ENCODE measurements at regions of chr6 and their contacts with region 1.

Region 1: DNA sequence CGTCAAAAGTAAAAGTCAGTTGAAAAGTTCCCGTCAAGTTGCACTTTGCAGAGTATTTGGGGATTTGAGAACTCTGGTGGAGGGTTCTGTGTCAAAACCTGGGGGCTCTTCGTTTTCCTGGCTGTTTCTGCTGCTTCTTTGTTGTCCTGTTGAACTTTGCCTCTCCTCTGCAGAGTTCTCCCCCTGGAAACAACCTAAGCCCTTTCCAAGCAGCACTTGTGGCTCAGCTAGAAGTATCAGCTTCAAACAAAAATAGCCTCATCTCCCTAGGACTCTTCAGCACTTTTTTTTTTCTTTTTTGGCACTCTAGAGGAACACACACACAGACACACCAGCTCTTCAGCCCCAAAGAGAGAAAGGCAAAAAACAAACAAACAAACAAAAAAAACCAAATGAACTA is at the start of gene TRDN:
- DNase-seq: peak in 1 of 2 donors; percentile 41
- ATAC-seq: peak; percentile 71 to 91 (median 88)
- H3K4me3 ChIP-seq: peak within 1 kb of the TSS in 9 of 10 donors; percentile 33 to 60 (median 53)
- H3K27ac ChIP-seq: peak within 1 kb of the TSS; percentile 70 to 92 (median 88)
- H3K4me1 ChIP-seq: peaks cover 0 to 31% (median 0%) of the 10 kb centered on the region in 9 donors
- H3K27me3 ChIP-seq: no peaks in the 10 kb centered on the region
- CTCF ChIP-seq: no peak
- total RNA-seq, gene TRDN: 328 to 484 (median 437) TPM

Region 2: GRCh38 chr6:123434186-123434585 is 202.6 kb before region 1 on chr6:
- intact Hi-C with region 1: loop called in 1 of 10 experiments (anchors 10 kb)
- DNase-seq: no peak
- ATAC-seq: peak in 2 of 8 donors; percentile 27 to 55
- H3K4me3 ChIP-seq: no peak overlapping the region
- H3K27ac ChIP-seq: peak overlapping the region in 2 of 10 donors; percentile 9 to 24
- H3K4me1 ChIP-seq: peaks cover 0 to 9% (median 0%) of the 10 kb centered on the region in 9 donors
- H3K27me3 ChIP-seq: no peaks in the 10 kb centered on the region
- CTCF ChIP-seq: no peak

Region 3: DNA sequence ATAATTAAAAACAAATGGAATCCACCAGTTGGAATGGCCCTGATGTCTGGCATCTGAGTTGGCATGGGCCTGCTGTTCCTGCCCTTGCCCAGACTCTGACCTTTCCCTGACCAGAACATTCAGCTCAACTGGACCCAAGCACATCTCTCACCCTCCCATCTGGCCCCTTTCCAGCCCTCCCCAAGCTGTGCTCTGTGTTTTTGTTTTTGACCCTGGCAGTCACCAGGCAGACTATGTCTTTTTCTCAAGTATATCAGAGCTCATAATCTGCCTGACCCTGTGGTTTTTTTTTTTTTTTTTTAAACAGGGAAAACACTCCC is 117.6 kb before region 1 on chr6:
- intact Hi-C with region 1: loop called in 4 of 10 experiments (anchors 5 to 10 kb)
- DNase-seq: peak; percentile 78 to 84
- ATAC-seq: peak; percentile 42 to 97 (median 94)
- H3K4me3 ChIP-seq: peak overlapping the region in 3 of 10 donors; percentile 6 to 21 (median 19)
- H3K27ac ChIP-seq: peak overlapping the region; percentile 9 to 90 (median 82)
- H3K4me1 ChIP-seq: peaks cover 0 to 35% (median 11%) of the 10 kb centered on the region in 9 donors
- H3K27me3 ChIP-seq: no peaks in the 10 kb centered on the region
- CTCF ChIP-seq: no peak